ENCODE measurements at regions of chr2 and their contacts with region 1.

Region 1: GRCh38 chr2:104872866-104873688 is 19.2 kb downstream of the POU3F3 start:
- DNase-seq: peak; percentile 87
- H3K4me3 Mint-ChIP-seq: peak overlapping the region; percentile 69
- H3K27ac Mint-ChIP-seq: no peak overlapping the region
- H3K4me1 Mint-ChIP-seq: peaks cover 8% of the 10 kb centered on the region
- H3K27me3 Mint-ChIP-seq: peaks cover 73% of the 10 kb centered on the region

Region 2: DNA sequence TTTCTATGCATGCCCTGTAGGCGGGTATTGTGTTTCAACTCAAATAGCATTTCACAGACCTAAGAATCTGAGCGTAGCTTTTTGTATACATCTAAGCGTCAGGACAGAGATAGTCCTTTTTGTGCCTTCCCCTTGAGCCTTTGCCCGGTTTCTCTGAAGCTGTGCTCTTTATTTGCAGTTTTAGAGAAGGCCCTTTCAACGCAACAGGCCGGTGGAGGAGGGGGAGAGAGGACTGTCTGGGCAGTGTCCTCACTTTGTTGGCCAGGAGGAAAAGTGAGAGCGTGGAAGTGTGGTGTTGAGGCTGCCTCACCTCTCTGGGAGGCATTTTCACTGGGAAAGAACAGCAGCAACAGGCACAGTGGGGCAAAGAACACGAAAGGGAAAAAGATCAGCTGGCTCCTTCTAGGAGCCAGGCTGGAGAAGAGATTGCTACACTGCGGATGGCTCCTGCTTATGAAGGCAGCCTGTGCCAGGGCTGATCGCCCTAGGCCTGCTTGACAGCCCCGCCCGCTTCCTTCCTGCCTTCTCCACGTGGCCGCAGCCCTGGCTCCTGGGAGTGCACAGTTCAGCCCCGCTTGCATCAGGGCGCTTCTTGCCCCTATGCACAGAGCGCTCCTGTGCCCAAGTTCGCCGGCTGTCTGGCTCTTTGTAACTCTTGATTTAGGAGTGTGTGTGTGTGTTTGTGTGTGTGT is 214.8 kb before region 1 on chr2:
- intact Hi-C with region 1: no loop called
- DNase-seq: peak; percentile 58
- H3K4me3 Mint-ChIP-seq: no peak overlapping the region
- H3K27ac Mint-ChIP-seq: no peak overlapping the region
- H3K4me1 Mint-ChIP-seq: peaks cover 6% of the 10 kb centered on the region
- H3K27me3 Mint-ChIP-seq: peaks cover 32% of the 10 kb centered on the region

Region 3: DNA sequence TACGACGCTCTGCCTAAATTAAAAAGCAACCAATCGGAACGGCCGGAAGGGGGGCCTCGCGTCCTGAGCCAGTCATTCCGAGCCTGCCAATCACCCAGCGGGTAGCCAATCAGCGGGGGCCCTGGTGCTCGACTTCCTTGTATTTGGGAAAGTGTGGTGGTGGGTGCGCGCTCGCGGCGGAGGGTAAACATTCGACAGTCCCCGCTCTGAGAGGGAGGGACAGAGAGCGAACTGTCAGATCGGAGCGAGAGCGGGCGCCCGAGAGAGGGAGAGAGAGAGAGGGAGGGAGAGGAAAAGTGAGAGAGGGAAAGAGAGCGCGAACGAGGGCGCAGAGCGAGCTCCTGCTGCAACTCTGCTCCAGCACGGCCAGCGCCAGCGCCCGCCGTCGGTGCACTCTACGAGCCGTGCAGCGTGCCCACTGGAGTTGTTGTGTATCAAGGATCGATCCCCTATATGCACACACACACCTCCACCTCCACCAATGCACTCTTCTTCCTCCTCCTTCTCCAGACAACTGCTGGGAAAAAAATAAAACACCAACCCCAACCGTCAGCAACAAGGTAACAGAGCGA is 19.1 kb before region 1 on chr2 and contains the start of gene POU3F3:
- intact Hi-C with region 1: loop called (anchors 2 kb)
- DNase-seq: peak; percentile 74
- H3K4me3 Mint-ChIP-seq: peak within 1 kb of the TSS; percentile 81
- H3K27ac Mint-ChIP-seq: peak within 1 kb of the TSS; percentile 92
- H3K4me1 Mint-ChIP-seq: peaks cover 31% of the 10 kb centered on the region
- H3K27me3 Mint-ChIP-seq: peaks cover 74% of the 10 kb centered on the region
- total RNA-seq, gene POU3F3: not detected in 2 replicates

Region 4: GRCh38 chr2:105179469-105180372 is 306.6 kb after region 1 on chr2:
- intact Hi-C with region 1: no loop called
- DNase-seq: no peak
- H3K4me3 Mint-ChIP-seq: no peak overlapping the region
- H3K27ac Mint-ChIP-seq: no peak overlapping the region
- H3K4me1 Mint-ChIP-seq: no peaks in the 10 kb centered on the region
- H3K27me3 Mint-ChIP-seq: peaks cover 4% of the 10 kb centered on the region

Region 5: DNA sequence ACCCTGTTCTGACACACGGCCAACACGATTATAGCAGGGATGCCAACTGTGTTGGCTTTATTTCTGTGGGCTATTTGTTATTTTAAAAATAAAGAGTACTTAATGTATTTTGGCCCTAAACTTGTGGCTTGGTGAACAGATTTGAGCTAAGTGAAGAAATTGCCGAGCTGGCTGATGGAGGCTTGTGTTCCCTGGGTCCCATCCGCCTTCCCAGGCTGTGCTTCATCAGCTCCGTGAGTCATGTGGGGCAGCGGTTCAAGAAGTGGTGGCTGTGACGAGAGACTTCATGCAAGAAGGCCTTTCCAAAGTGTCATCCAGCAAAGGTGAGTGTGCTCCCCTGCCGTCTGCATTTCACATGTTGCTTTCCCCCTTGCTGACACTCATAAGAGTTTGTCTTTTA is 798.1 kb after region 1 on chr2:
- intact Hi-C with region 1: no loop called
- DNase-seq: peak; percentile 41
- H3K4me3 Mint-ChIP-seq: no peak overlapping the region
- H3K27ac Mint-ChIP-seq: no peak overlapping the region
- H3K4me1 Mint-ChIP-seq: peaks cover 13% of the 10 kb centered on the region
- H3K27me3 Mint-ChIP-seq: no peaks in the 10 kb centered on the region

Measured in activated CD4-positive, alpha-beta T cell treated with anti-CD3 and anti-CD28 coated beads, Interleukin-2, amount 10 ng/mL, durations not matched to agents 24 days and 14 days (primary cell).